Gastrocnemius medialis (tissue), 4 donors: ENCODE measurements at regions of chr9 and their contacts with region 1.

Region 1: GRCh38 chr9:35903049-35903448 is 3.0 kb upstream of the HRCT1 start:
- DNase-seq: no peak
- ATAC-seq: no peak
- H3K4me3 ChIP-seq: no peak overlapping the region
- H3K27ac ChIP-seq: no peak overlapping the region
- H3K4me1 ChIP-seq: peaks cover 28 to 41% of the 10 kb centered on the region in 2 donors
- H3K27me3 ChIP-seq: no peaks in the 10 kb centered on the region
- CTCF ChIP-seq: peak; percentile 57 to 76 (median 67)
- POLR2A ChIP-seq: no peak

Region 2: GRCh38 chr9:35945341-35946018 is 42.4 kb after region 1 on chr9:
- in situ Hi-C with region 1: loop called in 2 of 4 experiments (anchors 5 kb)
- intact Hi-C with region 1: loop called (anchors 1 kb)
- DNase-seq: peak; percentile 45 to 63
- ATAC-seq: peak; percentile 59 to 88
- H3K4me3 ChIP-seq: peak overlapping the region in 3 of 4 donors; percentile 20 to 31 (median 29)
- H3K27ac ChIP-seq: peak overlapping the region; percentile 11 to 56 (median 45)
- H3K4me1 ChIP-seq: peaks cover 6 to 9% of the 10 kb centered on the region in 2 donors
- H3K27me3 ChIP-seq: no peaks in the 10 kb centered on the region
- CTCF ChIP-seq: peak; percentile 43 to 82 (median 67)
- POLR2A ChIP-seq: no peak

Region 3: DNA sequence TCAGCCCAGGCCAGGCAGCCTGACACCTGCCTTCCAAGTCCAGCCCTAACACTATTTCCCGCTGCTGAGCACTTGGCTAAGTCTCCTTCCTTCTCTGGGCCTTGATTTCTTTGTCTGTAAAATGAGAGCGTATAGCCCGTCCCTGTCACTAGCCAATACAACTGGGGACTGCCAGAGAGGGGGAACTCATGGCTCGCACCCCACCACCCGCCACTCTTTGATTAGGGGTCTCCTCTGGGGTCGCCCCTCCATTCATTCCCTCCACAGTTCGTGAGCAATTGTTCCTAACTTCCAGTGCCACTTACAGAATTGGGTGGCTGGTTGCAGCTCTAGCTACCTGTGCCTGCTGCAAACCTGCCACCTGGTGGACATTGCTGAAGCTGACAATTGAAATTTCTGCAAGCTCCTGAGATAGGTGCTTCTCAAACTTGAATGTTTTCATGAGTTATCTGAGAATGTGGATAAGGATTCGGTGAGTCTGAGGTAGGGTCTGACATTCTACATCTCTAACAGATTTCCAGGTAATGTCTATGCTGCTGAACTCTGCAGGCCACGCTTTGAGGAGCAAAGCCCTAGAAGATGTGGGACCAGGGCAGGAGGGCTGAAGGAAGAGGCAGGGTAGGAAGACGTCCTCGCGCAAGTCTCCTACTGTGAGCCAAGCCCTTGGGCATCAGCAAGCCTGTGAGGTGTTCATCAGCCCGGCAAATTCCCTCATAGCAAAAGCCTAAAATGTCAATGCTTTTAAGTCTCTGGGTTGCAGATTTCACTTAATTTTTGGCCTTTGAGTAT is 120.4 kb after region 1 on chr9:
- in situ Hi-C with region 1: loop called in 1 of 4 experiments (anchors 10 kb)
- intact Hi-C with region 1: loop called (anchors 5 kb)
- DNase-seq: peak; percentile 13 to 36
- ATAC-seq: peak; percentile 74 to 76
- H3K4me3 ChIP-seq: no peak overlapping the region
- H3K27ac ChIP-seq: no peak overlapping the region
- H3K4me1 ChIP-seq: no peaks in the 10 kb centered on the region
- H3K27me3 ChIP-seq: no peaks in the 10 kb centered on the region
- CTCF ChIP-seq: peak; percentile 36 to 81 (median 72)
- POLR2A ChIP-seq: no peak